H1 (cell line): ENCODE measurements at regions of chr5 and their contacts with region 1.

Region 1: GRCh38 chr5:150357326-150358260 is at the start of gene TCOF1:
- DNase-seq: peak; percentile 91 to 98
- H3K4me3 ChIP-seq: peak within 1 kb of the TSS; percentile 91 to 99 (median 96)
- H3K27ac ChIP-seq: peak within 1 kb of the TSS; percentile 73
- H3K4me1 ChIP-seq: peaks cover 0 to 7% (median 2%) of the 10 kb centered on the region in 4 experiments; a peak in 4 of 7 replicates
- H3K27me3 ChIP-seq: no peaks in the 10 kb centered on the region
- CTCF ChIP-seq: no peak
- EP300 ChIP-seq: no peak
- POLR2A ChIP-seq: peak; percentile 74 to 82
- RAD21 ChIP-seq: no peak
- total RNA-seq, gene TCOF1: 158 and 170 TPM in 2 replicates

Region 2: DNA sequence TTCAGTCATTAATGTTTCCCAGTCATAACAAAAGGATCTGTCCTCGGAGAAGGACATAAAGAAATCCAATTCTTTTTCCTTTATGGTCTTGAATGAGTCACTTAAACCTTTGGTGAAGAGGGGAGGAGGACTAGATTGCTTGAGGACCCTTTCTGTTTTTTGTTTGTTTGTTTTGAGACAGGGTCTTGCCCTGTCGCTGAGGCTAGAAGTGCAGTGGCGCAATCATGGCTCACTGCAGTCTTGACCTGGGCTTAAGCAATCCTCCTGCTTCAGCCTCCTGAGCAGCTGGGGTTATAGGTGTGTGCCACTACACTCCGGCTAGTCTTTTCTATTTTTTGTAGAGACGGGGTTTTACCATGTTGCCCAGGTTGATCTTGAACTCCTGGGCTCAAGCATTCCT is 369.5 kb before region 1 on chr5:
- CTCF ChIA-PET with region 1: no interaction called
- POLR2A ChIA-PET with region 1: no interaction called
- DNase-seq: no peak
- H3K4me3 ChIP-seq: no peak overlapping the region
- H3K27ac ChIP-seq: no peak overlapping the region
- H3K4me1 ChIP-seq: no peaks in the 10 kb centered on the region
- H3K27me3 ChIP-seq: no peaks in the 10 kb centered on the region
- CTCF ChIP-seq: no peak
- EP300 ChIP-seq: no peak
- POLR2A ChIP-seq: no peak
- RAD21 ChIP-seq: no peak

Region 3: DNA sequence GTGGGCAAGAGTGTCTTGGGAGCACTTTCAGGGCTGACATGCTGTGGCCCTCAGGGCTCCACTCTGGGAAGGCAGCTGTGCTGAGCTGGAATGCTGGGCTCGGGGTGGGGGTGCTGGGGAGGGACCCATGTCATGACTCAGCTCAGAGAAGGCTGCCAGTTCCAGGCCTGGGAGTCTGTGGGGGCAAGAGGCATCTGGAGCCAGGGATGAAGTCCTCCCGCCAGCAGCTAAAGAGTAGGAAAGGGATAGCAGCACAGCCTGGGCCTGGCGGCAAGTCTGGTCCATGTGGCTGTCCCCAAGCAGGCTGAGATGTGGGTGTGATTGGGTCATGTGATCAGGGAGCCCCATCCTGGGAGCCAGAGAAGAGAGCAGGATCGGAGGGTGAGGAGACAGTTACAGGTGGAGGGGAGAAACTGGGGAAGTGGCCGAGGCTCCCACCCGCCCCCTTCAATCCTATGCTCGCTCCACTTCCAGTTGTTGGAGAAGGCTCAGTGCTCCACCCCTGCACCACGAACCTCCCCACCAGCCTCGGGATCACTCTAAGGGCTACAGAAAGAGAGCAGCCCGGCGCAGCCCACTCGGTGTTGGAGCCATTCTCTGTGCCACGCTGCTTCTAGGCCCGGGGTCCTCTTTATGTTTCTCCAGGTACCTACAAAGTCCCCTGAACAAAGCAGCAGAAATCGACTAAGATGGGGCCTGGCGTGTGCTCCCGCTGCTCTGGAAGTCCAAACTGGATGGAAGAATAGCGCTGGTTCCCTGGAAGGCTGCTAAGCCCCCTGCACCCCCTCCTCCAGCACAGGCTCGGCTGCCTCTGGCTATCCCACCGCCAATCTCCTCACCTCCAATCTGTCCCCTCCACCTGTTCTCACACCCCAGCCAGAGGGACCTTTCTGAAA is 214.0 kb before region 1 on chr5:
- CTCF ChIA-PET with region 1: no interaction called
- POLR2A ChIA-PET with region 1: no interaction called
- DNase-seq: no peak
- H3K4me3 ChIP-seq: no peak overlapping the region
- H3K27ac ChIP-seq: no peak overlapping the region
- H3K4me1 ChIP-seq: peaks cover 4 to 23% (median 16%) of the 10 kb centered on the region in 4 experiments
- H3K27me3 ChIP-seq: no peaks in the 10 kb centered on the region; a peak in 1 of 7 replicates
- CTCF ChIP-seq: no peak
- EP300 ChIP-seq: no peak
- POLR2A ChIP-seq: no peak
- RAD21 ChIP-seq: no peak

Region 4: GRCh38 chr5:150302301-150303069 is 55.1 kb before region 1 on chr5 and contains the start of gene ARSI:
- CTCF ChIA-PET with region 1: interaction called, 62 read pairs
- POLR2A ChIA-PET with region 1: interaction called, 16 read pairs
- DNase-seq: peak in 1 of 2 experiments; percentile 86
- H3K4me3 ChIP-seq: peak within 1 kb of the TSS; percentile 41 to 67 (median 55)
- H3K27ac ChIP-seq: no peak within 1 kb of the TSS
- H3K4me1 ChIP-seq: peaks cover 9 to 23% (median 14%) of the 10 kb centered on the region in 4 experiments
- H3K27me3 ChIP-seq: peaks cover 0 to 12% (median 7%) of the 10 kb centered on the region in 4 experiments; a peak in 5 of 7 replicates
- CTCF ChIP-seq: peak in 2 of 3 experiments; percentile 33 to 50; a peak in 3 of 4 replicates
- EP300 ChIP-seq: no peak
- POLR2A ChIP-seq: no peak
- RAD21 ChIP-seq: peak in 1 of 2 experiments; percentile 8; a peak in 1 of 4 replicates
- total RNA-seq, gene ARSI: 4.5 TPM in 2 replicates

Region 5: GRCh38 chr5:150372639-150373038 is 15.0 kb after region 1 on chr5:
- CTCF ChIA-PET with region 1: interaction called, 3 read pairs
- POLR2A ChIA-PET with region 1: interaction called, 235 read pairs
- DNase-seq: no peak
- H3K4me3 ChIP-seq: no peak overlapping the region
- H3K27ac ChIP-seq: no peak overlapping the region
- H3K4me1 ChIP-seq: no peaks in the 10 kb centered on the region
- H3K27me3 ChIP-seq: no peaks in the 10 kb centered on the region
- CTCF ChIP-seq: no peak
- EP300 ChIP-seq: no peak
- POLR2A ChIP-seq: no peak
- RAD21 ChIP-seq: no peak

Region 6: GRCh38 chr5:150377964-150378694 is 20.5 kb after region 1 on chr5:
- CTCF ChIA-PET with region 1: interaction called, 9 read pairs
- POLR2A ChIA-PET with region 1: interaction called, 235 read pairs
- DNase-seq: no peak
- H3K4me3 ChIP-seq: no peak overlapping the region
- H3K27ac ChIP-seq: no peak overlapping the region
- H3K4me1 ChIP-seq: no peaks in the 10 kb centered on the region
- H3K27me3 ChIP-seq: no peaks in the 10 kb centered on the region
- CTCF ChIP-seq: no peak
- EP300 ChIP-seq: no peak
- POLR2A ChIP-seq: no peak
- RAD21 ChIP-seq: no peak

Region 7: GRCh38 chr5:150409638-150410523 is 52.3 kb after region 1 on chr5:
- CTCF ChIA-PET with region 1: interaction called, 4 read pairs
- POLR2A ChIA-PET with region 1: interaction called, 455 read pairs
- DNase-seq: peak; percentile 44 to 80
- H3K4me3 ChIP-seq: peak overlapping the region; percentile 9 to 37 (median 29); a peak in 6 of 8 replicates
- H3K27ac ChIP-seq: no peak overlapping the region
- H3K4me1 ChIP-seq: peaks cover 8 to 27% (median 13%) of the 10 kb centered on the region in 4 experiments
- H3K27me3 ChIP-seq: no peaks in the 10 kb centered on the region
- CTCF ChIP-seq: no peak
- EP300 ChIP-seq: no peak
- POLR2A ChIP-seq: no peak
- RAD21 ChIP-seq: no peak